H1 (cell line): ENCODE measurements at regions of chr16 and their contacts with region 1.

Region 1: DNA sequence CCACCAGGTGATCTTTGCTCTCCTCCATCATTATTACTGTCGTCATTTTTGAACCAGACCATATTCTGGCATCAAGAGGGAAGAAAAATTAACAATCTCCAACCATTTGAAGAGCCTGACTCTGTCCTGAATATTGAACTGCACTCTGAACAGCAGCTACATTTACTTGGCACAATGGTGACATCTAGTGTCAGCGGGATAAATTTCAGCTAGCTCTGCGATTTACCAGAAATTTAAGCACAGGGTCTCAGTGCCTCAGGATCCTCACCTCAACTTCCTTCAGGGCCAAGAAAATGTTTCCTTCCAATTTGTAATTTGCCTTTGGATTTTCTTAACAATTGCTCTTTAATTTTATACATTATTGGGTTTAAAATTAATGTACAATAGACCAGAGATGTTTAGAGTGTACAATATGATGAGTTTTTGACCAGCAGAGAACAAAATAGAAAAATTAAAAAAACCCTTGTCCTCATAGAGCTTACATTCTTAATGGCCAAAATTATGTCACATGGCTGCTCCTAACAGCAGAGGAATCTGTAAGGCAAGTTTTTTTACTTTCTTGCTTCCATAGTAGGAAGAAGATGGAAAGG is 10.7 kb upstream of the ZNF19 start:
- DNase-seq: peak in 1 of 2 experiments; percentile 60
- H3K4me3 ChIP-seq: no peak overlapping the region
- H3K27ac ChIP-seq: no peak overlapping the region
- H3K4me1 ChIP-seq: no peaks in the 10 kb centered on the region
- H3K27me3 ChIP-seq: no peaks in the 10 kb centered on the region; a peak in 1 of 7 replicates
- CTCF ChIP-seq: peak in 2 of 3 experiments; percentile 81 to 83; a peak in 3 of 4 replicates
- EP300 ChIP-seq: no peak
- POLR2A ChIP-seq: no peak
- RAD21 ChIP-seq: peak; percentile 84 to 88

Region 2: DNA sequence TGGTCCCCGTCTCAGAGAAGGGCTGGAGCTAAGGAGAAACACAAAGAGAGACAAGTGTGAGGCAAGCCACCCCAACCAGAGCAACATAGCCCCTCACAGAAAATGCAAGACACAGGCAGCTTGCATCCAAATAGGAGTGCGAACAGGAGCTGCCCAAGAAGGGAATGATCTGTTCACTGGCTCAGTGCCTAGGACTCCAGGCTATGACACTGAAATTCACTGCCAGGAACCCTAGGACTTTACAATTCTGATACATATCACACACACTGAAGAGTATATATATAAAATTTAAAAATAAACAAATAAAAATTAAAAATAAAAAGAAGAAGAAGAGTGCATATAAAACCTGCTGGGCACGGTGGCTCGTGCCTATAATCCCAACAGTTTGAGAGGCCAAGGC is 43.1 kb before region 1 on chr16:
- CTCF ChIA-PET with region 1: interaction called, 22 read pairs
- POLR2A ChIA-PET with region 1: no interaction called
- DNase-seq: no peak
- H3K4me3 ChIP-seq: no peak overlapping the region
- H3K27ac ChIP-seq: no peak overlapping the region
- H3K4me1 ChIP-seq: peaks cover 0 to 2% (median 0%) of the 10 kb centered on the region in 4 experiments; a peak in 1 of 7 replicates
- H3K27me3 ChIP-seq: no peaks in the 10 kb centered on the region
- CTCF ChIP-seq: no peak
- EP300 ChIP-seq: no peak
- POLR2A ChIP-seq: no peak
- RAD21 ChIP-seq: no peak

Region 3: DNA sequence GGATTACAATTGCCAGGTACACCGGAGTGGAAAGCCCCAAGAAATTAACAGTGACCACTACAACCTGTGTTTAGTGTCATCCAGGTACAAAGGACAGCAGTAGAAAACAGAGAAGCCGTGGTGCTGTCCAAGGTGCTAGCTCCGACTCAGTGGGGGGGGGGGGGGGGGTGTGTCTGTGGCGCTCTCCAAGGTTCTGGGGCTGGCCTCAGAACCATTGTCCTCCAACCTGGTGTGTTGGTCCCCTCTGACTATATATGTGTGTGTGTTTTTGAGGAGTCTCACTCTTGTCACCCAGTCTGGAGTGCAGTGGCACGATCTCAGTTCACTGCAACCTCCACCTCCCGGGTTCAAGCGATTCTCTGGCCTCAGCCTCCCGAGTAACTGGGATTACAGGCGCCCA is 32.1 kb before region 1 on chr16:
- CTCF ChIA-PET with region 1: interaction called, 17 read pairs
- POLR2A ChIA-PET with region 1: interaction called, 3 read pairs
- DNase-seq: no peak
- H3K4me3 ChIP-seq: no peak overlapping the region
- H3K27ac ChIP-seq: no peak overlapping the region
- H3K4me1 ChIP-seq: no peaks in the 10 kb centered on the region
- H3K27me3 ChIP-seq: no peaks in the 10 kb centered on the region
- CTCF ChIP-seq: no peak
- EP300 ChIP-seq: 0 out of 3 replicates have a peak, but pooled peaks of 1 of the 2 experiments have one; percentile 14
- POLR2A ChIP-seq: no peak
- RAD21 ChIP-seq: no peak

Region 4: GRCh38 chr16:71515026-71515425 is 15.2 kb after region 1 on chr16:
- CTCF ChIA-PET with region 1: interaction called, 17 read pairs
- POLR2A ChIA-PET with region 1: interaction called, 4 read pairs
- DNase-seq: no peak
- H3K4me3 ChIP-seq: no peak overlapping the region
- H3K27ac ChIP-seq: no peak overlapping the region
- H3K4me1 ChIP-seq: peaks cover 0 to 4% (median 1%) of the 10 kb centered on the region in 4 experiments; a peak in 4 of 7 replicates
- H3K27me3 ChIP-seq: no peaks in the 10 kb centered on the region
- CTCF ChIP-seq: no peak
- EP300 ChIP-seq: no peak
- POLR2A ChIP-seq: no peak
- RAD21 ChIP-seq: no peak

Region 5: GRCh38 chr16:71532366-71532765 is 32.5 kb after region 1 on chr16:
- CTCF ChIA-PET with region 1: interaction called, 133 read pairs
- POLR2A ChIA-PET with region 1: no interaction called
- DNase-seq: no peak
- H3K4me3 ChIP-seq: no peak overlapping the region
- H3K27ac ChIP-seq: no peak overlapping the region
- H3K4me1 ChIP-seq: no peaks in the 10 kb centered on the region
- H3K27me3 ChIP-seq: no peaks in the 10 kb centered on the region
- CTCF ChIP-seq: no peak
- EP300 ChIP-seq: no peak
- POLR2A ChIP-seq: no peak
- RAD21 ChIP-seq: no peak